ACHN (cell line): ENCODE measurements at regions of chr3 and their contacts with region 1.

Region 1: DNA sequence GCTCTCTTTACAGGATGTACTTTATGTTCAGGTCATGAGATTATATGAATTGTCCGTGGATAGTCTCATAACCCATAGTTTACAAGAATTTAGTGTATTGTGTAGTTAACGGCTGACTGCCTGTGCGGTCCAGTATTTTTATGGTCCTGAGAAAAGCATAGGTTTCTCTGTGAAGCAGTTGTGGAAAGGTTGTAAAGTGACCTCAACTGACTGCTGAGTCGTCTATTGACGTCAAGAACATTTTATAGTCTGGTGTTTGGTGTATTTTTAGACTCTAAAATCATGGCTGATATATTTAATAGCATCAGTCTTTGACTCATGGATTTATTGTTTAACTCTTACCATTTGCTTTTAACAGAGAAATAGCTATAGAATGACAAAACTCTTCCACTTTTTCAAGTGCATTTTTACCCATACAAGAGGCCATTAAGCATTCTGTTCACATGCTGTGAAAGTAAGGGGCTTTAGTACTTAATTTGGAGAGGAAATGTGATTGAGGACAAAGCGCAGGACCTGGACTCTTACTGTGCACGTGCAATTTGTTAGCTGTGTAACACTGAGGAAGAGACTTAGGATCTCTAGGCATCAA is 240.7 kb downstream of the NFKBIZ start:
- DNase-seq: peak; percentile 94

Region 2: GRCh38 chr3:101849721-101850245 is 240.2 kb before region 1 on chr3:
- in situ Hi-C with region 1: loop called (anchors 25 kb)
- DNase-seq: no peak